CD4-positive, alpha-beta memory T cell (primary cell): ENCODE measurements at regions of chr3 and their contacts with region 1.

Region 1: DNA sequence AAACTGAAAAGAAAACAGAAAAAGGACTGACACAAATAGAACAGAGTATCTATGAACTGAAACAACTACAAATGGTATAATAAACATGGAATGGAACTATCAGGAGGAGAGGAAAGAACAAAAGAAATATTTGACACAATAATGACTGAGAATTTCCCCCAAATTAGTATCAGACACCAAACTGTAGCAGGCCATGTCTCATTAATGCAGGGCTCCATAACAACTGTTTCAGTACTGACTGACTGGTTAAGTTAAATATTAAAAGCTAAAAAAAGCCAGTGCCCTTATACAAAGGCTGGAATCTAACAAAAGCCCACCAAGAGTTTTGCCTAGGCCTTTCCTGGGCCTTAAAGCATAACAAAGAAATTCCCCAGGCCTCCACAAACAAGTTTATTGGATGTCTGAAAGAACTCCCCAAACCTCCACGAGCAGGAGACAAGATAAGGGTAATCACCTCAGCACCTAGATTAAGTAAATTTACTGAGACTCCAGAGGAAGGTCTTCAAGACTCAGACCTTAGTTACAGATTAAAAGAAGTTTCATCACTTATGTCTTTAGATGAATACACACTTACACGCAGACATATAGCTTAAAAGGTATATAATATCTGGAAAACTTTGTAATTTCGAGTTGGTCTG is 45.7 kb downstream of the KPNA1 start:
- DNase-seq: no peak
- H3K4me3 ChIP-seq: no peak overlapping the region
- H3K4me3 Mint-ChIP-seq: peak overlapping the region in 2 of 8 donors; percentile 4 to 23
- H3K27ac ChIP-seq: no peak overlapping the region
- H3K27ac Mint-ChIP-seq: peak overlapping the region in 5 of 7 donors; percentile 12 to 74 (median 32)
- H3K4me1 ChIP-seq: peaks cover 38% of the 10 kb centered on the region
- H3K4me1 Mint-ChIP-seq: peaks cover 33 to 63% (median 52%) of the 10 kb centered on the region in 4 donors
- H3K27me3 ChIP-seq: no peaks in the 10 kb centered on the region
- H3K27me3 Mint-ChIP-seq: no peaks in the 10 kb centered on the region

Region 2: GRCh38 chr3:122427857-122428471 is 41.1 kb before region 1 on chr3:
- CTCF ChIA-PET with region 1: no interaction called
- POLR2A ChIA-PET with region 1: no interaction called
- intact Hi-C with region 1: no loop called
- DNase-seq: no peak
- H3K4me3 ChIP-seq: no peak overlapping the region
- H3K4me3 Mint-ChIP-seq: no peak overlapping the region
- H3K27ac ChIP-seq: no peak overlapping the region
- H3K27ac Mint-ChIP-seq: peak overlapping the region in 6 of 7 donors; percentile 5 to 70 (median 56)
- H3K4me1 ChIP-seq: no peaks in the 10 kb centered on the region
- H3K4me1 Mint-ChIP-seq: peaks cover 0 to 14% (median 5%) of the 10 kb centered on the region in 4 donors
- H3K27me3 ChIP-seq: no peaks in the 10 kb centered on the region
- H3K27me3 Mint-ChIP-seq: no peaks in the 10 kb centered on the region

Region 3: GRCh38 chr3:122514123-122515019 is 45.4 kb after region 1 on chr3 and contains the start of gene KPNA1:
- CTCF ChIA-PET with region 1: no interaction called
- POLR2A ChIA-PET with region 1: no interaction called
- intact Hi-C with region 1: loop called (anchors 5 kb)
- DNase-seq: peak; percentile 86 to 92 (median 90)
- H3K4me3 ChIP-seq: peak within 1 kb of the TSS; percentile 58 to 71
- H3K4me3 Mint-ChIP-seq: peak within 1 kb of the TSS; percentile 90 to 95 (median 93)
- H3K27ac ChIP-seq: peak within 1 kb of the TSS; percentile 97
- H3K27ac Mint-ChIP-seq: peak within 1 kb of the TSS; percentile 91 to 98 (median 96)
- H3K4me1 ChIP-seq: peaks cover 30% of the 10 kb centered on the region
- H3K4me1 Mint-ChIP-seq: peaks cover 24 to 51% (median 36%) of the 10 kb centered on the region in 4 donors
- H3K27me3 ChIP-seq: no peaks in the 10 kb centered on the region
- H3K27me3 Mint-ChIP-seq: no peaks in the 10 kb centered on the region
- total RNA-seq, gene KPNA1: 67.4 to 71.5 TPM